Activated T-helper 1 cell treated with anti-CD3 and anti-CD28 coated beads, Interleukin-12 subunit alpha, Interleukin-12 subunit beta, Interleukin-2, Interleukin-4 antibody, amounts not matched to agents 30 ng/mL and 10 ng/mL and 1 ng/mL, durations not matched to agents 14 hours and 24 hours and 36 hours (primary cell): ENCODE measurements at regions of chrX and their contacts with region 1.

Region 1: GRCh38 chrX:110450050-110450449 is 91.4 kb downstream of the RTL9 start:
- DNase-seq: peak; percentile 14
- H3K4me3 Mint-ChIP-seq: no peak overlapping the region
- H3K27ac Mint-ChIP-seq: no peak overlapping the region
- H3K4me1 Mint-ChIP-seq: no peaks in the 10 kb centered on the region
- H3K27me3 Mint-ChIP-seq: no peaks in the 10 kb centered on the region

Region 2: GRCh38 chrX:110133735-110134370 is 316.2 kb before region 1 on chrX:
- intact Hi-C with region 1: no loop called
- DNase-seq: no peak
- H3K4me3 Mint-ChIP-seq: no peak overlapping the region
- H3K27ac Mint-ChIP-seq: peak overlapping the region; percentile 71
- H3K4me1 Mint-ChIP-seq: peaks cover 18% of the 10 kb centered on the region
- H3K27me3 Mint-ChIP-seq: no peaks in the 10 kb centered on the region

Region 3: GRCh38 chrX:110412971-110413721 is 36.9 kb before region 1 on chrX:
- intact Hi-C with region 1: no loop called
- DNase-seq: peak; percentile 42
- H3K4me3 Mint-ChIP-seq: no peak overlapping the region
- H3K27ac Mint-ChIP-seq: no peak overlapping the region
- H3K4me1 Mint-ChIP-seq: peaks cover 14% of the 10 kb centered on the region
- H3K27me3 Mint-ChIP-seq: peaks cover 6% of the 10 kb centered on the region

Region 4: DNA sequence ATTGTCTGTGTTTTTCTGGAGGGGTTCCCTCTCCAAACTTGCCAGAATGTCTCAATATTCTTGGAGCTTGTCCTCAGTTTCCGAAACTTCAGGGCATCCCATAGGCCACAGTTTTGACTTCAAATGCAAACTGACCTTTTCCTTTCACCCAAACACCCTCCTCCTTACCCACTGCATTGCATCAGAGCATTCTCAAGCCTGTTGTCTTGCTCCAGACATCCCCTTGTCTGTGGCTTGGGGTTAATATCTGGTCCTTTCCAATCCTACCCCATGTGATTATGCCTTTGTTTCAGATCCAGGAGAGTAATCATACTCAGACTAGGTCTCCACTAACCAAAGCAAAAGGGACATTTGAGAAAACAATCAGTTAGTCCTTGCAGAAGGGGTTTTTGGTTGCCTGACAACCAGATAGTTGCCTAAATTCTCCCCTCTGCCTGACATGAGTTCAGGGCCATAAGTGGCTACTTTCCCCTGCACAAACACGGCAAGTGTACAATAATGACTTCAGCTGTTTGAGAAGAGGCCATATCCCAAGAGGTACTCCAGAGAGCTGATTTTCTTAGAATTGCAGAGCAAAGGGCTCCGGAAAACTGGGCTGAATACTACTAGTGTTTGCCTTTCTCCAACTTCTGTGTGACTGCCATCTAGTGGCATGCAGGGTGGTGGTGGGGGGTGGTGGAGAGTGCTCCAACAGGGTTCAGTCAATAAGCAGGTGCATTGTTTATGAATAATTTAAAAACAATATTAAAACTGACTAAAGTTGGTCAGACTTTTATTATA is 215.4 kb after region 1 on chrX:
- intact Hi-C with region 1: loop called (anchors 2 kb)
- DNase-seq: no peak
- H3K4me3 Mint-ChIP-seq: no peak overlapping the region
- H3K27ac Mint-ChIP-seq: no peak overlapping the region
- H3K4me1 Mint-ChIP-seq: no peaks in the 10 kb centered on the region
- H3K27me3 Mint-ChIP-seq: no peaks in the 10 kb centered on the region

Region 5: GRCh38 chrX:110847334-110847733 is 397.3 kb after region 1 on chrX:
- intact Hi-C with region 1: loop called (anchors 1 kb)
- DNase-seq: peak; percentile 0
- H3K4me3 Mint-ChIP-seq: no peak overlapping the region
- H3K27ac Mint-ChIP-seq: no peak overlapping the region
- H3K4me1 Mint-ChIP-seq: no peaks in the 10 kb centered on the region
- H3K27me3 Mint-ChIP-seq: no peaks in the 10 kb centered on the region

Region 6: GRCh38 chrX:111244235-111244750 is 794.2 kb after region 1 on chrX:
- intact Hi-C with region 1: loop called (anchors 1 kb)
- DNase-seq: no peak
- H3K4me3 Mint-ChIP-seq: no peak overlapping the region
- H3K27ac Mint-ChIP-seq: no peak overlapping the region
- H3K4me1 Mint-ChIP-seq: no peaks in the 10 kb centered on the region
- H3K27me3 Mint-ChIP-seq: peaks cover 5% of the 10 kb centered on the region